Esophagus muscularis mucosa (tissue), 4 donors: ENCODE measurements at regions of chr11 and their contacts with region 1.

Region 1: DNA sequence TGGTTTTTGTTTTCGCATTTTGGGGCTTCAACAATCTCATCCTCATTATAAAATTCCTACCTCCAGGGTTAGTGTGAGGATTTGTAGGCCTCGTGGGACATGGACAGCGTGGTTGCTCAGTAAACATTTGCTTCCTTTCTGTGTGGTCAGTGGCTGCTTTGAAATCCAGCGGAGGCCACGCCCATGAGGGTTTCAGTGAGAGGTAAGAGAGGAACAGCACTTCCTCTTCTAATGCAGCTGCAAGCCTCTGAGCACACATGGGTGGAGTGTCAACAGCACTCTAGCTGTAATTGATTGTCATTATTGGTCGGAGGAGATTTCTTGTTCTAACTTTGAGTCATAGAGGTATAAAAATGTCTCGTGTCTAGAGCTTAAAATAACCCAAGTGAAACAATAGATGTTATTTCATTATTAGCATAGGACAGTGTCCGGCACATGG is 6.0 kb upstream of the ARHGAP42 start:
- DNase-seq: no peak
- H3K4me3 ChIP-seq: no peak overlapping the region
- H3K27ac ChIP-seq: no peak overlapping the region
- H3K4me1 ChIP-seq: peaks cover 6 to 14% (median 11%) of the 10 kb centered on the region in 4 donors
- H3K27me3 ChIP-seq: no peaks in the 10 kb centered on the region
- CTCF ChIP-seq: no peak
- EP300 ChIP-seq: no peak
- POLR2A ChIP-seq: no peak

Region 2: DNA sequence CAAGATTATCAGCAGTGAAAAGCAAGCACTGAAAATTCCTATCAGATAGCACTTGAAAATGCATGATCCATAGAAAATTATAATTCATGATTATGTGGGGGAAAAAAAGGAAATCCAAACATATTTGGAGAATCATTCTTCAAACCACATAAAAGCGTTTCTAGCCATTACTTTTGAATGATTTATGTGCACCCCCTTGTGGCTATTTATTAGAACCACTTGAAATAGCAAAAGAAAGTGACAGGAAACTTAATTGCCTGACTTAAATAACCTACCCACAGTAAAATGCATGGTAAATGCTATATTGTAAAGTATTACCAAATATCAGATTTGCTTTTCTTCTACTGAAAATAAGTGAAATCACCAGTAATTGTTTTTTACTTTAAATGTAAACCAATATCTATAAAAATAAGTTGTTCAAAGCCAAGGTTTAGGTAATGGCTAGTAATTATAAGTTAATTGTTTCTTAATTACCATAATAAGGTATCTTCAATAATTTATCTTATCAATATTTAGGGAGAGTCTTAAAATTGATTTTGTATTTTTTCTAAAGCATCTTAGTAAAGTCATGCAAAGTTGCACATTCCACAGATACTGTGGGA is 174.5 kb after region 1 on chr11:
- intact Hi-C with region 1: loop called (anchors 2 kb)
- DNase-seq: no peak
- H3K4me3 ChIP-seq: no peak overlapping the region
- H3K27ac ChIP-seq: no peak overlapping the region
- H3K4me1 ChIP-seq: no peaks in the 10 kb centered on the region
- H3K27me3 ChIP-seq: no peaks in the 10 kb centered on the region
- CTCF ChIP-seq: peak; percentile 67 to 71 (median 70)
- EP300 ChIP-seq: no peak
- POLR2A ChIP-seq: no peak

Region 3: GRCh38 chr11:100930185-100930778 is 249.2 kb after region 1 on chr11:
- intact Hi-C with region 1: loop called (anchors 5 kb)
- DNase-seq: no peak
- H3K4me3 ChIP-seq: no peak overlapping the region
- H3K27ac ChIP-seq: no peak overlapping the region
- H3K4me1 ChIP-seq: no peaks in the 10 kb centered on the region
- H3K27me3 ChIP-seq: no peaks in the 10 kb centered on the region
- CTCF ChIP-seq: peak; percentile 59 to 76 (median 65)
- EP300 ChIP-seq: no peak
- POLR2A ChIP-seq: no peak